Common myeloid progenitor, CD34-positive (primary cell): ENCODE measurements at regions of chr16 and their contacts with region 1.

Region 1: DNA sequence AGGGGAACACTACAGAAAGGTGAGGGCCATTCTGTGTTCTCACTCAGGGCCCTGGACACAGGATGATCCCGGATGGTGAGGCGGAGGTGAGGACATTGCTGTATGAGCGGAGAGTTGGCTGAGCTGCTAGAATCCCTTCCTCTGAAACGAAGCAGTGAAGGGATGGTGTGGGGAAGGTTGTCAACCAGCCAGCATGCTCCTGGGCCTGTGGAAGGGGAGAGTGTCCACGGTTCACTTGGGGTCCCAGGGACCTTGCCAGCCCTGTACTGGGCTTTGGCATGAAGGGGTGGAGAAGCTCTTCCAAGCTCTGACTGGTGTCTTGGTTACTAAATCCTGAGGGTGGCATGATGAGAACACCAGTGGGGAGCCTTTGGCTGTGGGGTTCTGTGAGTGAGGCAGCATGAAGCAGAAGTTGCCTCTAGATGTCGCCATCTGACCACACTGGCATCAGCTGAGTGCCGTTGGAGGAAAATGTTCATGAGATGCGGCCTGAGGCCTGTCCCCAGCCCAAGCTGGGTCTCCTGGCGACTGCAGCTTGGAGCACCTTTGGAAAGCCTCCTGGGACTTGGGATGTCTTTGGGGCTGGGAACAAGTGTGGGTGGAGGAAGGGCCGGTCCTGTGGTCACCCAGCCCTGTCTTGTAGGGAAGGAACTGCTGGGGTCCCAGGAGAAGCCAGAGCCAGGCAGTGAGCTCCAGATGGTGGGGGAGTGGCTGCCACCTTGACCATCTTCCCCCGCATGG is 14.8 kb downstream of the PDP2 start:
- DNase-seq: peak; percentile 75 to 87 (median 81)
- H3K4me3 ChIP-seq: no peak overlapping the region
- H3K27ac ChIP-seq: no peak overlapping the region
- H3K4me1 ChIP-seq: peaks cover 0 to 8% (median 1%) of the 10 kb centered on the region in 4 experiments
- H3K27me3 ChIP-seq: no peaks in the 10 kb centered on the region

Region 2: GRCh38 chr16:66824006-66824405 is 71.1 kb before region 1 on chr16:
- CTCF ChIA-PET with region 1: no interaction called
- POLR2A ChIA-PET with region 1: no interaction called
- DNase-seq: no peak
- H3K4me3 ChIP-seq: no peak overlapping the region
- H3K27ac ChIP-seq: no peak overlapping the region
- H3K4me1 ChIP-seq: peaks cover 0 to 4% (median 2%) of the 10 kb centered on the region in 4 experiments
- H3K27me3 ChIP-seq: no peaks in the 10 kb centered on the region

Region 3: GRCh38 chr16:66880288-66881013 is 14.7 kb before region 1 on chr16 and contains the start of gene PDP2:
- CTCF ChIA-PET with region 1: interaction called, 14 read pairs
- POLR2A ChIA-PET with region 1: no interaction called
- DNase-seq: peak; percentile 89 to 93 (median 91)
- H3K4me3 ChIP-seq: peak within 1 kb of the TSS; percentile 53 to 85 (median 74)
- H3K27ac ChIP-seq: no peak within 1 kb of the TSS
- H3K4me1 ChIP-seq: peaks cover 6 to 35% (median 29%) of the 10 kb centered on the region in 4 experiments
- H3K27me3 ChIP-seq: no peaks in the 10 kb centered on the region

Region 4: DNA sequence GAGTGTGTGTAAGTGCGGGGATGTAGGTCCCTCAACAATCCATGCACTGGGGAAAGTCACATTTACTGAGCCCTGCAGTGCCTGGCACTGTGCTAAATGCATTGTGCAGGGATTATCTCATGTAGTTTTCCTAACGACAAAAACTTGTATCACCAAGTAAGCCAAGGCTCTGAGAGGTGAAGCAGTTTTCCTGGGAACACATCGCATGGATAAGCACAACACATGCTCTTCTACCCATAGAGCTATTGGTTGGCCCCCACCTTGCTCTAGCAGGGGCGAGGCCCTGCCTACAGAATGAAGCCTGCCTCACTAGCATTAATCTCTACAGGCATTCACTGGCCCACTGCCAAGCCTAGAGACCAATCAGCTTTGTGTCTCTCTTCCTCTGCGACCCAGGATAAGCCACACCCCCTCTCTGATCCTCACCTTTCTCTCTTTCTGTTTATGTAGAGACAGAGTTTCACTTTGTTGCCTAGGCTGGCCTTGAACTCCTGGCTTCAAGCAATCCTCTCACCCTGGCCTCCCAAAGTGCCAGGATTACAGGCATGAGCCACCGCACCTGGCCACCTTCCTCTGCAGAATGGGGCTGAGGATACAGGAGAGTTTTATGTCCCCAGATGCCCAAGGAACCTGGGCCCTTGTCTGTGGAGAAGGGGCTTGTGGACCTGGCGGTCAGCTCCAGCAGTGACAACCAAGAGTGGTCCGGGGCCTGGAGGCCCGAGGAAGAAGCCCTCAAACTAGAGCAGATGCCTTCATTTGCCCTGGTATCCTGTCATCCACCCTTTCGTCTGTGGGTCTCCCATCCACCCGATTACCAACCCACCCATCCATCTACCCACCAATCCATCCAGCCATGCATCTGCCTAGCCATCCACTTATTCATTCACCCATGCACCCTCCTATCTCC is 10.8 kb after region 1 on chr16:
- CTCF ChIA-PET with region 1: interaction called, 473 read pairs
- POLR2A ChIA-PET with region 1: no interaction called
- DNase-seq: peak in 1 of 3 donors; percentile 36
- H3K4me3 ChIP-seq: no peak overlapping the region
- H3K27ac ChIP-seq: no peak overlapping the region
- H3K4me1 ChIP-seq: no peaks in the 10 kb centered on the region
- H3K27me3 ChIP-seq: peaks cover 0 to 7% (median 0%) of the 10 kb centered on the region in 5 experiments

Region 5: DNA sequence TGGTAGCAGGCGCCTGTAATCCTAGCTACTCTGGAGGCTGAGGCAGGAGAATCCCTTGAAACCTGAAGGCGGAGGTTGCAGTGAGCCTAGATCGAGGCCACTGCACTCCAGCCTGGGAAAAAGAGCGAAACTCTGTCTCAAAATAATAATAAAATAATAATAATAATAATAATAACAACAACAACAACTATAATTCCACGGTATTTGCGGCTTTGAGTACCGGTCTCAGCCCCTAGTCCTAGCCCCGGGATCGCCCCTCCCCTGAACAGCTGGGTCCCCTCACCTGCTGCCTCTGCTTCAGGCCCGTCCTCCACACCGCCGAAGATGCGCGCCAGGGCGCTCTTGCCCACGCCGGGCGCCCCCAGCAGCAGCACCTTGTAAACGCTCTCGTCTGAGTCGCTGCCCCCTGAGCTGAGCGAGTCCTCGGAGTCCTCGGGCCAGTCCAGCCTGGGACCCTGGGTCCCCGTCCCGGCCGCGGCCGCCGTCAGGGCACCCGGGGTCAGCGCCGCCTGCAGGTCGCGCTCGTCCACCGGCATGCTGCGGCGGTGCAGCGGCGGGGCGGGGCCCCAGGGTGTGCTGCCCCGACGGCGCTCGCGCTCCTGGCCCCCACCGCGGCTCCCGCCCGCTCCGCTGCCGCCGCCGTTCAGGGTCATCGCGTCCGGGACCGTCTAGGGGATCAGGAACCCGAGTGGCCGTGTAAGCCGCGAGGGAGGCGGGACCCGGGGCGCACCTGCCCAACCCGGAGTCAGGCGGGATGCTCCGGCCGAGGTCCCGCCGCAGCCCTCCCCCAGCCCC is 29.6 kb after region 1 on chr16:
- CTCF ChIA-PET with region 1: interaction called, 473 read pairs
- POLR2A ChIA-PET with region 1: interaction called, 3 read pairs
- DNase-seq: peak in 1 of 3 donors; percentile 39
- H3K4me3 ChIP-seq: peak overlapping the region in 4 of 7 experiments; percentile 13 to 50 (median 34)
- H3K27ac ChIP-seq: no peak overlapping the region
- H3K4me1 ChIP-seq: peaks cover 0 to 18% (median 15%) of the 10 kb centered on the region in 4 experiments
- H3K27me3 ChIP-seq: peaks cover 0 to 64% (median 33%) of the 10 kb centered on the region in 5 experiments

Region 6: DNA sequence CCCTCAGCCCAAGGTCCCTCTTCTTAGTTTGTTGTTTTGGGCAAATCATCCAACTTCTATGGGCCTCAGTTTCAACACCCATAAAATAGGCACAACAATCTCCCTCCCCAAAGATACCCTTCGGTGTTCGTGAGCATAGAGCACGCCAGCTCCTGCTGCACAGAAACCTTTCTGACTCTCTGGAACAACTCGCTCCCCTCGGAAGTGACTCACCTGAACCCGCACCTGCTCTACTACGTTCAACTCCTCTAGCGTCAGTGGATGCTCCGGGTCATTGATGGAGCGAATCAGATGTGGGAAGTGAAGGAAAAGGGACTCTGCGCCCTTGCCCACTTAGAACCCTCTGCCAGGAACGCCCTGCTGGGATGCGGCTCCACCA is 38.6 kb after region 1 on chr16:
- CTCF ChIA-PET with region 1: interaction called, 473 read pairs
- POLR2A ChIA-PET with region 1: no interaction called
- DNase-seq: no peak
- H3K4me3 ChIP-seq: peak overlapping the region; percentile 76 to 98 (median 92)
- H3K27ac ChIP-seq: peak overlapping the region; percentile 92 to 93
- H3K4me1 ChIP-seq: peaks cover 3 to 30% (median 25%) of the 10 kb centered on the region in 4 experiments
- H3K27me3 ChIP-seq: no peaks in the 10 kb centered on the region

Region 7: DNA sequence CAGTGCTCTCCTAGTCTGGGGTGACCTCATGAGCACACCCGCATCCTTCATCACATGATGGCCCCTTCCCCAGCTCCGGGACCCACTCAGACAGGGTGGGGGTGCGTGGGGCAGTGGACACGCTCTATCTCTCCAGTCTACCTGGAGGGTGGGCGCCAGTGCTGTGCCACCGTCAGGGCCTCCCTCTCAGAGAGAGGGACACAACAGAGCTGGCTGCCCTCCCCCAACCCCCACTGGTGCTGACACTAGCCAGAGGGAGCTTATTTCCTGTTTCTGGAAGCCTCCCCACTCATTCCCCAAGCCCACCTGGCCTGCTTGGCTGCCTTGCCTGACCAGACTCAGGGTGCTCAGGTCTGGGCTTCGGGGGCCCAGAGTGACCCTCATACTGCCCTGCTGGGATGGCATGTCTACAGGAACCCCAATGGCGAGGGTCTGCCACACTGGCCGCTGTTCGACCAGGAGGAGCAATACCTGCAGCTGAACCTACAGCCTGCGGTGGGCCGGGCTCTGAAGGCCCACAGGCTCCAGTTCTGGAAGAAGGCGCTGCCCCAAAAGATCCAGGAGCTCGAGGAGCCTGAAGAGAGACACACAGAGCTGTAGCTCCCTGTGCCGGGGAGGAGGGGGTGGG is 48.4 kb after region 1 on chr16:
- CTCF ChIA-PET with region 1: interaction called, 13 read pairs
- POLR2A ChIA-PET with region 1: no interaction called
- DNase-seq: no peak
- H3K4me3 ChIP-seq: no peak overlapping the region
- H3K27ac ChIP-seq: no peak overlapping the region
- H3K4me1 ChIP-seq: peaks cover 0 to 12% (median 11%) of the 10 kb centered on the region in 4 experiments
- H3K27me3 ChIP-seq: peaks cover 3 to 11% (median 7%) of the 10 kb centered on the region in 5 experiments